ENCODE measurements at regions of chr11 and their contacts with region 1.

Region 1: GRCh38 chr11:75328426-75329277 is 22.8 kb downstream of the ARRB1 start:
- DNase-seq: peak; percentile 69 to 89 (median 81)
- ATAC-seq: peak; percentile 82 to 85
- H3K4me3 ChIP-seq: no peak overlapping the region
- H3K27ac ChIP-seq: no peak overlapping the region
- H3K4me1 ChIP-seq: peaks cover 2% of the 10 kb centered on the region
- H3K27me3 ChIP-seq: no peaks in the 10 kb centered on the region

Region 2: GRCh38 chr11:75383246-75383645 is 54.6 kb after region 1 on chr11:
- intact Hi-C with region 1: loop called in 3 of 4 experiments (anchors 2 to 5 kb)
- DNase-seq: no peak
- ATAC-seq: peak in 1 of 2 donors; percentile 3
- H3K4me3 ChIP-seq: no peak overlapping the region
- H3K27ac ChIP-seq: no peak overlapping the region
- H3K4me1 ChIP-seq: peaks cover under 1% of the 10 kb centered on the region
- H3K27me3 ChIP-seq: no peaks in the 10 kb centered on the region